GM12878 (cell line): ENCODE measurements at regions of chr10 and their contacts with region 1.

Region 1: DNA sequence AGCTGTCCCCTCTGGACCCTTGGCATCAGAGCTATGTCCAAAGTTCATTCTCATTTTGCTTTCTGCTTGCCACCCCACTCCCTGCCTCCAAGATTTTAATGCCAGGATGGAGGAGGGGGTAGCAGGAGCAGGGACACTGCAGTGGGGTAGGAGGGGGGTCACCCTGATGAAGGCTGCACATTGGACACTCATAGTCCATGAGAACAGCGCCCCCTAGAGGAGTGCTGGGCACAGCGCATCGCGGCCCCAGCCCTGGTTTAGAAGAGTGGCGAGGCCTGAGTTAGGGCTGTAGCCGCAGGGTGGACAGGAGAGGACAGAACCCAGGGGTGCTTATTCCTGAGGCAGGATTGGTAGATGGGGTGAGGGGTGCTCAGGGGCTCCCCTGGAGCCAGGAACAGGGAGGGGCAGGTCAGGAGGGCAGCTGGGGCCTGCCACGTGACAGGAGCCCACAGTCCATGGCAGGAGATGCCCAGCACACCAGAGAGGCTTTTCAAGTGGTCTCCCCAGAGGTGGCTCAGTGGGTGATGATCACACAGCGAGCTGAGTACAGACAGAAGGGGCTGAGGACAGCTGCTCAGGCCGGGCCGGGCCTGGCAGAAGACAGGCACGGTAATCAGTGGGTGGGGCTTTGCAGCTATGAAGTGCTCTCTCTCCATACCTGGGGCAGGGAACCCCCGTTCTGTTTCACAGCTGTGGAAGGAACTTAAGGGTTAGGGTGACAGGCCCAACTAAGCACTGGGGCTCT is 71.4 kb downstream of the NEURL1 start:
- DNase-seq: no peak
- ATAC-seq: peak; percentile 81
- H3K4me3 ChIP-seq: no peak overlapping the region
- H3K27ac ChIP-seq: no peak overlapping the region
- H3K4me1 ChIP-seq: no peaks in the 10 kb centered on the region
- H3K27me3 ChIP-seq: no peaks in the 10 kb centered on the region
- CTCF ChIP-seq: peak; percentile 44 to 78 (median 75)
- EP300 ChIP-seq: no peak
- POLR2A ChIP-seq: no peak
- RAD21 ChIP-seq: peak; percentile 44

Region 2: DNA sequence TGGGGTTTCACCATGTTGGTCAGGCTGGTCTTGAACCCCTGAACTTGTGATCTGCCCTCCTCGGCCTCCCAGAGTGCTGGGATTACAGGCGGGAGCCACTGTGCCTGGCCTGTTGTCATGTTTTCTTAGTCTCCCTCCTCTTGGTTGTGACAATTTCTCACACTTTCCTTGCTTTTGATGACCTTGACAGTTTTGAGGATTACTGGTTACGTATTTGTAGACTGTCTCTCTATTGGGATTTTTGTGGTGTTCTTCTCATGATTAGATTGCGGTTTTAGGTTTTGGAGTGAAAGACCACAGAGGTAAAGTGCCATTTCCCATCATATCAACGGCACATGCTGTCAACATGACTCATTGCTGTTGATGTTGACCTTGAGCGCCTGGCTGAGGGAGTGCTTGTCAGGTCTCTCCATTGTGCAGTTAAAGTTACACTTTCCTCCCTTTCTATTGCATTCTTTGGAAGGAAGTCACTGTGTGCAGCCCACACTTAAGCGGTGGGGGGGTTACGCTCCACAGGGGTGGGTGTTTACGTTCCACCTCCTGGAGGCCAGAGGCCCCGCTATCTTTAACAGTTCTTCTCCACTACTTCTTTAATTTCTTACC is 60.7 kb before region 1 on chr10:
- CTCF ChIA-PET with region 1: interaction called, 11 read pairs
- POLR2A ChIA-PET with region 1: no interaction called
- RAD21 ChIA-PET with region 1: no interaction called
- SMC1A ChIA-PET with region 1: no interaction called
- in situ Hi-C with region 1: no loop called
- intact Hi-C with region 1: no loop called
- DNase-seq: peak; percentile 28
- ATAC-seq: peak; percentile 78
- H3K4me3 ChIP-seq: no peak overlapping the region
- H3K27ac ChIP-seq: no peak overlapping the region
- H3K4me1 ChIP-seq: peaks cover 6% of the 10 kb centered on the region
- H3K27me3 ChIP-seq: peaks cover 0 to 3% of the 10 kb centered on the region in 2 experiments; a peak in 1 of 4 replicates
- CTCF ChIP-seq: no peak
- EP300 ChIP-seq: no peak
- POLR2A ChIP-seq: no peak
- RAD21 ChIP-seq: no peak

Region 3: DNA sequence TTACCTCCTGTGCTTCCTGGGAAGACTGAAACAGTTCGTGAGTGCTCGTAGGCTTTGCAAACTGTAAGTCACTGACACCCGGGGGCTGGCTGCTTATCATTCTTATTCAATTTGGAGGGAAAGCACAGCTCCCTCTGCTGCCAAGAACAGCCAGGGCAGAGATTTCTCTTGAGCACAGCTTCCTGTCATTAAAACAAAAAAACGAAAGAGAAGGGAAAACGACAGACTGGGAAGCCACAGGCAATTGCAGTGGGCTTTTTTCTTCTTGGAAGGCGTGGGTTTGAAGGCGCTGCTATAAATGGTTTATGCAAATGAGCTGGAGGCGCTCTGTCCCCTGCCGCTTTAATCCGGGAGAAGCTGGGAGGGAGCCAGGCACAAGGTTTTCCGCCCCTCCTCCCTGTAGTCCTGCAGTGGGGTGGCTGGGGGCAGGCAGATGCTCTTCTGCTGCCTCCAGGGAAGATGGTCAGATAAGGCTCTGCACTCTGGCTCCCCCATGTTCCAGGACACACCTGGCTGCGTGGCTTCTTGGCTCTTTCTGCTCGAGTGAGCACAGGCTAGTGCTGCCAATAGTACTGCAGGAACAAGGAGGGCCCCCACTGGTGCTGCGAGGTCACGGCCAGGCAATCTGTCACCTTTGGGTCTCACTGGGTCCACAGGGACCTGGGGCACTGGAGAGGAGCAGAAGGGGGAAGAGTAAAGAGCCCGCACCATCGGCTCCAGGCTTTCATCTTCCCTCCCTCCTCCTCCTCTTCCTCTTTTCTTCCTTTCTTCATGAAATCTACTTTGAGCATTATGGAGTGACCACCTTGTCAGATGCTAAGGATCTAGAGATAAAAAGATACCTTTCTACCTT is 22.0 kb before region 1 on chr10:
- CTCF ChIA-PET with region 1: interaction called, 14 read pairs
- POLR2A ChIA-PET with region 1: no interaction called
- RAD21 ChIA-PET with region 1: no interaction called
- SMC1A ChIA-PET with region 1: interaction called, 4 read pairs
- in situ Hi-C with region 1: no loop called
- intact Hi-C with region 1: no loop called
- DNase-seq: peak; percentile 13
- ATAC-seq: peak; percentile 82
- H3K4me3 ChIP-seq: peak overlapping the region; percentile 57
- H3K27ac ChIP-seq: no peak overlapping the region
- H3K4me1 ChIP-seq: peaks cover 11% of the 10 kb centered on the region
- H3K27me3 ChIP-seq: no peaks in the 10 kb centered on the region; a peak in 2 of 4 replicates
- CTCF ChIP-seq: peak; percentile 28 to 56 (median 45)
- EP300 ChIP-seq: no peak
- POLR2A ChIP-seq: no peak
- RAD21 ChIP-seq: peak; percentile 33; the same call in 1 of the 2 replicates

Region 4: DNA sequence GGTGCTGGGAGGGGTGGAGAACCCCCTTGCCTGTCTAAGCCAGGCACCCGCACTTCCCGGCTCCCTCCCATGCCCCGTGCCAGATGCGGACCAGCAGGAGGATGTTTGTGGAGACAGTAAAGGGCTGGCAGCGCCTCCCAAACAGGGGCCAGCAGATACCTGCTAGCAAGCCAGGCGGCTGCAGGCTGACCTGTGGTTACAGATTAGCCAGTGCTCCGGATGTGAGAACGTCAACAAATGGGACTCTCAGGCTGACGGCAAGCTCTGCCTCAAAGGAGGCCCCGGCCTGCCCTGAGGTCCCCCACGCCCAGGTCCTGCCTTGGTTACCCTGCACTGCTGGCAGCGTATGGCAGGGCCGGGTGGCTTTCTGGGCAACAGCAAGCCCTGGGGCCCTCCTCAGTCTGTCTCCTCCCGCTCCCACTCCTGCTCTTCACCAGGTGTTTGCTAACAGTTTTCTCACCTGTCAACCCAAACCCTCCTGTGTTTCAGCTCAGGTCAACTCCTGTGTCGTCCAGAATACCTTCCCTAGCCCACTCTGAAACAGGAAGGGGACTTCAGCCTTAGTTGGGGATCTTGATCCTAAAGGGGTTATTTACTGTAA is 13.9 kb after region 1 on chr10:
- CTCF ChIA-PET with region 1: interaction called, 11 read pairs
- POLR2A ChIA-PET with region 1: no interaction called
- RAD21 ChIA-PET with region 1: no interaction called
- SMC1A ChIA-PET with region 1: no interaction called
- in situ Hi-C with region 1: no loop called
- intact Hi-C with region 1: no loop called
- DNase-seq: no peak
- ATAC-seq: peak; percentile 85
- H3K4me3 ChIP-seq: no peak overlapping the region
- H3K27ac ChIP-seq: no peak overlapping the region
- H3K4me1 ChIP-seq: no peaks in the 10 kb centered on the region
- H3K27me3 ChIP-seq: no peaks in the 10 kb centered on the region; a peak in 4 of 4 replicates
- CTCF ChIP-seq: no peak
- EP300 ChIP-seq: no peak
- POLR2A ChIP-seq: no peak
- RAD21 ChIP-seq: no peak